A673 (cell line): ENCODE measurements at regions of chr3 and their contacts with region 1.

Region 1: GRCh38 chr3:143135150-143135549 is 15.6 kb downstream of the CHST2 start:
- DNase-seq: peak; percentile 86
- H3K4me3 ChIP-seq: no peak overlapping the region
- H3K27ac ChIP-seq: no peak overlapping the region
- H3K4me1 ChIP-seq: peaks cover 4% of the 10 kb centered on the region
- H3K27me3 ChIP-seq: no peaks in the 10 kb centered on the region
- CTCF ChIP-seq: no peak

Region 2: DNA sequence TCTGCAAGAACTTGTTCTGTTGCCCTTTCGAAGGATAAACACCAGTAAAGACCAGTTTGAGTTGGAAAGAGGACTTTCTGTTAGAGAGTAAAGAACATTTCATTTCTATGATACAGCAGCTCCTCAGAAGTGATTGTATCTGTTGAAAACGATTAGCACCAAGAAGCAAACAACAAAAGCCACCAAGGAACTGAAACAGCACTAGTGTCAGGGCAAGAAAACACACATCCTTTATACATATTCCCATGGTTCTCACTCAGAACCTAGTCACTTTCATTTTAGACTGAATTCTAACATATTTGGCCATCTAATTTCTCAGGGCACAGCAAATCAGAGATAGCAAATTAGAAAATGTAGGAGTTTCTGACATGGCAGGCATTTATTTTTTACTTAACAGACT is 1142.6 kb before region 1 on chr3:
- CTCF ChIA-PET with region 1: interaction called, 10 read pairs
- POLR2A ChIA-PET with region 1: no interaction called
- intact Hi-C with region 1: no loop called
- DNase-seq: no peak
- H3K4me3 ChIP-seq: no peak overlapping the region
- H3K27ac ChIP-seq: no peak overlapping the region
- H3K4me1 ChIP-seq: no peaks in the 10 kb centered on the region
- H3K27me3 ChIP-seq: no peaks in the 10 kb centered on the region
- CTCF ChIP-seq: no peak

Region 3: GRCh38 chr3:142586803-142587406 is 548.2 kb before region 1 on chr3:
- CTCF ChIA-PET with region 1: no interaction called
- POLR2A ChIA-PET with region 1: no interaction called
- intact Hi-C with region 1: no loop called
- DNase-seq: peak; percentile 81
- H3K4me3 ChIP-seq: no peak overlapping the region
- H3K27ac ChIP-seq: no peak overlapping the region
- H3K4me1 ChIP-seq: no peaks in the 10 kb centered on the region
- H3K27me3 ChIP-seq: no peaks in the 10 kb centered on the region
- CTCF ChIP-seq: peak; percentile 63

Region 4: DNA sequence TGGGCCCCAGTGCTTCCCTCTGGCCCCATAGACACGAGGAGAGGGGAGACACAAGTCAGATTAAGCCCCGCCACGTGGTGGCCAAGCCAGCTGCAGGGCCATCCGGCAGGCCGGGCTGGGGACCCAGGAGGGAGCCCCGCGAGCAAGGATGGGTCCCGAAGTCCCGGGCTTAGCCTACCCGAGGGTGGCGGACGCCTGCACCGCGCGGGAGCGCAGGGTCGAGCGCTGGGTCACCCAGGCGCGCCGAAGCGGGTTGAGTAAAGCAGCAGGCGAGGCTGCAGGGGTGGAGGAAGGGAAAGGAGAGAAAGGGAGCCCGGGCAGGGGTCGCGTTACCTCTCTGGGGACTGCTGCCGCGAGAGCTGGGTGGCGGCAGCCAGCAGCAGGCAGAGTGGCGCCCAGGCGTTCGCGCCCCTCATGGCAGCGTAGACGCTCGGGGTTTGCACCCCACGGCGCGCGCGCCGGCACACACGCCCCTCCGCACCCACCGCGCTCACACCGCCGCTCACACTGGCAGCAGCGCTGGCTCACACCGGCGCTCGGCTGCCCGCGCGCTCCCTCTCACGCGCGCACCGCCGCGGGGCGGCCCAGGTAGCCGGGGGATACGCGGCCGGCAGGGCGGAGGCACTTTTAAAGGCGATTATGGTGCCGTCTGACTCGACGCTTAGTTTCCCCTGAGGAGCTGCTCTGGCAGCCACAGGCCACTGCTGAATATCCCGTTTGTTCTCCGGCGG is 246.5 kb before region 1 on chr3 and contains the start of gene PCOLCE2:
- CTCF ChIA-PET with region 1: no interaction called
- POLR2A ChIA-PET with region 1: no interaction called
- intact Hi-C with region 1: no loop called
- DNase-seq: peak; percentile 42
- H3K4me3 ChIP-seq: peak within 1 kb of the TSS; percentile 61
- H3K27ac ChIP-seq: no peak within 1 kb of the TSS
- H3K4me1 ChIP-seq: peaks cover 16% of the 10 kb centered on the region
- H3K27me3 ChIP-seq: peaks cover 13% of the 10 kb centered on the region
- CTCF ChIP-seq: no peak
- total RNA-seq, gene PCOLCE2: 5.0 and 6.4 TPM in 2 replicates

Region 5: GRCh38 chr3:143192193-143192592 is 57.0 kb after region 1 on chr3:
- CTCF ChIA-PET with region 1: no interaction called
- POLR2A ChIA-PET with region 1: no interaction called
- intact Hi-C with region 1: no loop called
- DNase-seq: no peak
- H3K4me3 ChIP-seq: no peak overlapping the region
- H3K27ac ChIP-seq: no peak overlapping the region
- H3K4me1 ChIP-seq: no peaks in the 10 kb centered on the region
- H3K27me3 ChIP-seq: no peaks in the 10 kb centered on the region
- CTCF ChIP-seq: no peak